ENCODE measurements at regions of chr7 and their contacts with region 1.

Region 1: DNA sequence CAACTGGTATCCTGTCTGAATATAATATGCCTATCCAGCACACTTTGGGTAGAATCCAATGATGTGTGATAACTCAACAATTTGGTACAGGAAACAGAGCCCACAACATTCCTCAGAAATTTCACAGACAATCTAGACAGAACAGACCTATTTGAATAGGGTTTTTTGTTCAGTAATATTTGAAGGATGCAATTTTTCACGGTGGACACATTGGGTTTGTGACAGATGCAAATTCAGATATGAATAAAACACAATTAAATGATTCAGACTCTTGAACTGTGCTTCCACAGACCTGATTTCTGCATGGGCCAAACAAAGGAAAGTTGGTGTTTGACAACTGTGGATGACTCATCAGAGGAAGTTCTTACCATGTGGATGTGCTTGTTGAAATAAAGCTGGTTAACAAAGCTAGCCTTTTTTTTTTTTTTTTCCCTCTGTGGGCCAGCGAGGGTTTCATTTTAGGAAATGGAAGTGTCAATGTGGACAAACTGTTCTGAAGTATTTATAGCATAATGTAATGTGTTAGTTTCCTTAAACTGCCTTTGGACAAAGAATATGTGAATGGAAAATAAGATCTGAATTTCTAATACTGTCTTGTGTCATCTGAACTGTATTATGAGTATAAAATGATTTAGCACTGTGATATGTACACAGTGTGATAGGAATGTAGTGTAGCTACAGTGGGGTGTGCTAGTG is 43.2 kb upstream of the FAM133B start:
- DNase-seq: no peak
- CTCF ChIP-seq: no peak

Region 2: GRCh38 chr7:92809397-92810241 is 176.3 kb after region 1 on chr7:
- in situ Hi-C with region 1: loop called (anchors 10 kb)
- DNase-seq: peak; percentile 45
- CTCF ChIP-seq: no peak

Measured in GM13976 (cell line).